ENCODE measurements at regions of chr17 and their contacts with region 1.

Region 1: GRCh38 chr17:58242171-58242784 is 3.9 kb downstream of the LPO start:
- DNase-seq: no peak
- ATAC-seq: no peak
- H3K4me3 ChIP-seq: no peak overlapping the region
- H3K27ac ChIP-seq: no peak overlapping the region
- H3K4me1 ChIP-seq: no peaks in the 10 kb centered on the region
- H3K27me3 ChIP-seq: peaks cover 0 to 83% (median 62%) of the 10 kb centered on the region in 7 donors
- CTCF ChIP-seq: no peak

Region 2: GRCh38 chr17:58210922-58211321 is 31.4 kb before region 1 on chr17:
- intact Hi-C with region 1: loop called in 1 of 10 experiments (anchors 1 kb)
- DNase-seq: no peak
- ATAC-seq: no peak
- H3K4me3 ChIP-seq: no peak overlapping the region
- H3K27ac ChIP-seq: no peak overlapping the region
- H3K4me1 ChIP-seq: no peaks in the 10 kb centered on the region
- H3K27me3 ChIP-seq: no peaks in the 10 kb centered on the region
- CTCF ChIP-seq: peak in 1 of 9 donors; percentile 14

Region 3: GRCh38 chr17:58329035-58329809 is 86.9 kb after region 1 on chr17:
- intact Hi-C with region 1: no loop called
- DNase-seq: no peak
- ATAC-seq: peak in 5 of 8 donors; percentile 23 to 42 (median 27)
- H3K4me3 ChIP-seq: peak overlapping the region in 2 of 10 donors; percentile 5 to 82
- H3K27ac ChIP-seq: peak overlapping the region in 1 of 10 donors; percentile 82
- H3K4me1 ChIP-seq: peaks cover 0 to 27% (median 6%) of the 10 kb centered on the region in 9 donors
- H3K27me3 ChIP-seq: peaks cover 0 to 78% (median 40%) of the 10 kb centered on the region in 7 donors
- CTCF ChIP-seq: peak in 4 of 9 donors; percentile 23 to 50 (median 34)

Measured in heart right ventricle (tissue), 16 donors.